Endothelial cell of umbilical vein (primary cell): ENCODE measurements at regions of chr22 and their contacts with region 1.

Region 1: DNA sequence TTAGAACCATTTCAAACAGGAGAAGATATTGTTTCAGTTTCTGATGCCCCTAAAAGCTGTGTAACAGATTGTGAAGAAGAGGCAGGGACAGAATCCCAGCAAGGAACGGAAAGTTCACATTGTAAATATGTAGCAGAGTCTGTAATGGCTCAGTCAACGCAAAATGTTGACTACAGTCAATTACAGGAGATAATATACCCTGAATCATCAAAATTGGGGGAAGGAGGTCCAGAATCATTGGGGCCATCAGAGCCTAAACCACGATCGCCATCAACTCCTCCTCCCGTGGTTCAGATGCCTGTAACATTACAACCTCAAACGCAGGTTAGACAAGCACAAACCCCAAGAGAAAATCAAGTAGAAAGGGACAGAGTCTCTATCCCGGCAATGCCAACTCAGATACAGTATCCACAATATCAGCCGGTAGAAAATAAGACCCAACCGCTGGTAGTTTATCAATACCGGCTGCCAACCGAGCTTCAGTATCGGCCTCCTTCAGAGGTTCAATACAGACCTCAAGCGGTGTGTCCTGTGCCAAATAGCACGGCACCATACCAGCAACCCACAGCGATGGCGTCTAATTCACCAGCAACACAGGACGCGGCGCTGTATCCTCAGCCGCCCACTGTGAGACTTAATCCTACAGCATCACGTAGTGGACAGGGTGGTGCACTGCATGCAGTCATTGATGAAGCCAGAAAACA is 40.8 kb downstream of the IGLL1 start:
- DNase-seq: peak; percentile 86
- H3K4me3 ChIP-seq: no peak overlapping the region
- H3K27ac ChIP-seq: no peak overlapping the region
- H3K4me1 ChIP-seq: no peaks in the 10 kb centered on the region
- H3K27me3 ChIP-seq: peaks cover 0 to 5% of the 10 kb centered on the region in 2 experiments
- CTCF ChIP-seq: peak; percentile 75 to 81
- POLR2A ChIP-seq: no peak

Region 2: DNA sequence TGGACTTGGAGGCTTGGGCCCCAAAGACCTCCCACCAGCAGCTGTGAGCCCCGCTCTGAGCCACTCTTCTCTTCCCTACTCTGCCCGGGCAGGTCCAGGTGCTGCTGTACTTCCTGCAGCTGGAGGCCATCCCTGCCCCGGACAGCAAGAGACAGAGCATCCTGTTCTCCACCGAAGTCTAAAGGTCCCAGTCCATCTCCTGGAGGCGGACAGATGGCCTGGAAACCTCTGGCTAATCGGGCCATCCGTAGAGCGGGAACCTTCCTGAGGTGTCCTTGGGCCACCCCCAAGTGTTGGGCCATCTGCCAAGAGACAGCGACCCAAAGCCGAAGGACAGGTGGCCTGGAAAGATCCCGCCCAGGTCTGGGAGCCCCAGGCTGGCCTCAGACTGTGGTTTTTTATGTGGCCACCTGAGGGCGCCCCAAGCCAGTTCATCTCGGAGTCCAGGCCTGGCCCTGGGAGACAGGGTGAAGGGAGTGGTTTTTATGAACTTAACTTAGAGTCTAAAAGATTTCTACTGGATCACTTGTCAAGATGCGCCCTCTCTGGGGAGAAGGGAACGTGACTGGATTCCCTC is 223.9 kb before region 1 on chr22:
- CTCF ChIA-PET with region 1: no interaction called
- POLR2A ChIA-PET with region 1: no interaction called
- dilution Hi-C with region 1: no loop called
- intact Hi-C with region 1: loop called (anchors 2 kb)
- DNase-seq: peak; percentile 49
- H3K4me3 ChIP-seq: no peak overlapping the region
- H3K27ac ChIP-seq: no peak overlapping the region
- H3K4me1 ChIP-seq: peaks cover 1% of the 10 kb centered on the region
- H3K27me3 ChIP-seq: no peaks in the 10 kb centered on the region
- CTCF ChIP-seq: peak; percentile 55 to 67
- POLR2A ChIP-seq: no peak

Region 3: DNA sequence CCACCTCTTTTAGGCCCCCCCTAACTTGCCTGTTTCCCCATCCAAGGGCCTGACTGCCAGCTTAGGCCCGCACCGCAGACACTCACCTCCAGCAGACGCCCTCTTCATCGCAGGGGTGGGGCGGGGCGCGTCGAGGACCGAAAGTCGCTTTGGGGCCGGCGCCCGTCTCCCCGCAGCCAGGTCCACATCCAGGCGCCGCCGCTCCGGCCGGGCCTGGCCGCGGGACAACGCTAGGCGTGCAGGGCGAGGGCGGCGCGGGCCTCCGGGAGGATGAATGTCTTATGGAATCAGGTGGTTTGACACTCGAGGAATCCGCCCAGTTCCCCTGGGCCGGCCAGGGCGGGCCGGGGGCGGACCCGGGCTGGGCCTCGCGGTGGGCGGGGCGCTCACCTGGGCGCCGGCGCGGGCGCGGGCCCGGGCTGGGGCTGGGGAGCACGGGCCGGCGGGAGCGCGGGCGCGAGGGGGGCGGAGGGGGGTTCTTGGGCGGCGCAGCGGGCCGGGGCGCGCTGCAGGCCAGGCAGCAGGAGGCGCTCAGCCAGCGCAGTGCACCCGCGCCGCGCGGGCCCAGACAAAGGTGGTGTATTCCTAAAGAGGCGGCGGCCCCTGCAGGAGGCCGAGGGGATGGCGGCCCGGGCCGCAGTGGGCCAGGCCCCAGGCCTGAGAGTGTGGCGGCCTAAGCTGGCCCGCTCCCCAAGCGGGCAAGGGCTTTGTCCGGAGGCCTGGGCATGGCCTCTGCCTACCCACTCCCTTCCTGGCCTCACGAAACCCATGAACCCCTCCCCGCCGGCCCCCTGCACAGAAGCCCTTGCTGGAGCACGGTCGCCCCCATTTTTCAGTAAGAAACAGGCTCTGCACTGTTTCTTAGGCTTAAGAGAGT is 136.8 kb before region 1 on chr22:
- CTCF ChIA-PET with region 1: interaction called, 4 read pairs
- POLR2A ChIA-PET with region 1: no interaction called
- dilution Hi-C with region 1: no loop called
- intact Hi-C with region 1: loop called (anchors 1 kb)
- DNase-seq: peak; percentile 39
- H3K4me3 ChIP-seq: peak overlapping the region in 1 of 3 experiments; percentile 15
- H3K27ac ChIP-seq: no peak overlapping the region
- H3K4me1 ChIP-seq: no peaks in the 10 kb centered on the region
- H3K27me3 ChIP-seq: no peaks in the 10 kb centered on the region
- CTCF ChIP-seq: peak; percentile 45 to 86
- POLR2A ChIP-seq: no peak

Region 4: GRCh38 chr22:23450434-23450795 is 88.9 kb before region 1 on chr22:
- CTCF ChIA-PET with region 1: no interaction called
- POLR2A ChIA-PET with region 1: no interaction called
- dilution Hi-C with region 1: no loop called
- intact Hi-C with region 1: no loop called
- DNase-seq: no peak
- H3K4me3 ChIP-seq: no peak overlapping the region
- H3K27ac ChIP-seq: no peak overlapping the region
- H3K4me1 ChIP-seq: no peaks in the 10 kb centered on the region
- H3K27me3 ChIP-seq: no peaks in the 10 kb centered on the region
- CTCF ChIP-seq: no peak
- POLR2A ChIP-seq: no peak

Region 5: DNA sequence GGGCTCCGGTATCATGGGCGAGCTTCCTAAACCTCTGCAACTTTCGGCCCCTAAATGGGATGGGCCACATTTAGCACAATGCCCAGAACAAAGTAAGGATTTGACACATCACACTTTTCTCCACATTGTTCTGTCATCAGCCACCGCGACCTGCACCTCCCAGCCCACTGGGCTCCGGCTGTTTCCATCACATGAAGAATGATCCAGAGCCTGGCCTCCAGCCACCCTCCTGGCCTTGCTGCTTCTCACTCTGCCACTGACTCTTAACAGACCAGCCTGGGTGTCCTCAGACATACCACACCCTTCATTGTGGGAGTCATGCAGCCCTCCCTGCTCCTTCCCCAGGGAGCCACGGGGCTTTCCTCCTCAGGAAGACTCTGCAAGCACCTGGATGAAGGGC is 72.9 kb before region 1 on chr22:
- CTCF ChIA-PET with region 1: no interaction called
- POLR2A ChIA-PET with region 1: no interaction called
- dilution Hi-C with region 1: no loop called
- intact Hi-C with region 1: no loop called
- DNase-seq: no peak
- H3K4me3 ChIP-seq: no peak overlapping the region
- H3K27ac ChIP-seq: no peak overlapping the region
- H3K4me1 ChIP-seq: no peaks in the 10 kb centered on the region
- H3K27me3 ChIP-seq: peaks cover 2 to 3% of the 10 kb centered on the region in 2 experiments
- CTCF ChIP-seq: no peak
- POLR2A ChIP-seq: no peak

Region 6: DNA sequence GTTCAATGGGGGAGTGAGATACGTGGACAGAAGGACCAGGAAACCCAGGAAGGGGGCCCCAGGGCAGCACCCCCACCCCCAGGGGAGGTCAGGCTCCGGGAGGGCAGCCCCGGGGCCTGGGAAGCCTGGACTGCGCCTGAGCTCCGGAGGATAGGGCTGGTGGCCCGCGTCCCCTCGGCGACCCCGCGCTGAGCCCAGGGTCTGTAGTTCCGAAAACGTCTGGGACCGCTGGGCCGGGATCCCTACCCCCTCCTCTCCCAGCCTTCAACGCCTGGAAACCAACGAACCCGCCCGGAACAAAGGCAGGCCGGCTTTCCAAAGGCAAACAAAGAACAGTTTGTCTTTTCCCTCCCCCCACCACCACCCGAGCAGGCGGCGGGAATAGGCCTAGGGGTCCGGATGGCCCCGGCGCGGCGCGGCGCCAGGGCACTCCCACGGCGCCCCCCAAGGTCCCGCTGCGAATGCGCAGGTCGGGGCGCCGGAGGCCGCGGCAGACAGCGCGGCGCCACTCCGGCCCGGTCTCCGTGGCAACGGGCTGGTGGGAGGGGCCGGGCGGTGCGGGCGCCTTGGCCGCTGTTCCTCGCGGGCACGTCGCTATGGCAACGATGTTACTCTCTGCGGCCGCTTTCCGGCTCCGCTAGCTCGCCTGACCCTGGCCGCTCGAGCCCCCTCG is 17.7 kb before region 1 on chr22:
- CTCF ChIA-PET with region 1: interaction called, 3 read pairs
- POLR2A ChIA-PET with region 1: no interaction called
- dilution Hi-C with region 1: no loop called
- intact Hi-C with region 1: loop called (anchors 2 kb)
- DNase-seq: peak; percentile 96
- H3K4me3 ChIP-seq: no peak overlapping the region
- H3K27ac ChIP-seq: peak overlapping the region; percentile 97
- H3K4me1 ChIP-seq: peaks cover 23% of the 10 kb centered on the region
- H3K27me3 ChIP-seq: no peaks in the 10 kb centered on the region
- CTCF ChIP-seq: no peak
- POLR2A ChIP-seq: peak; percentile 35

Region 7: GRCh38 chr22:23553924-23554870 is 14.9 kb after region 1 on chr22:
- CTCF ChIA-PET with region 1: no interaction called
- POLR2A ChIA-PET with region 1: no interaction called
- dilution Hi-C with region 1: no loop called
- intact Hi-C with region 1: no loop called
- DNase-seq: no peak
- H3K4me3 ChIP-seq: no peak overlapping the region
- H3K27ac ChIP-seq: no peak overlapping the region
- H3K4me1 ChIP-seq: no peaks in the 10 kb centered on the region
- H3K27me3 ChIP-seq: peaks cover 0 to 2% of the 10 kb centered on the region in 2 experiments
- CTCF ChIP-seq: no peak
- POLR2A ChIP-seq: no peak

Region 8: DNA sequence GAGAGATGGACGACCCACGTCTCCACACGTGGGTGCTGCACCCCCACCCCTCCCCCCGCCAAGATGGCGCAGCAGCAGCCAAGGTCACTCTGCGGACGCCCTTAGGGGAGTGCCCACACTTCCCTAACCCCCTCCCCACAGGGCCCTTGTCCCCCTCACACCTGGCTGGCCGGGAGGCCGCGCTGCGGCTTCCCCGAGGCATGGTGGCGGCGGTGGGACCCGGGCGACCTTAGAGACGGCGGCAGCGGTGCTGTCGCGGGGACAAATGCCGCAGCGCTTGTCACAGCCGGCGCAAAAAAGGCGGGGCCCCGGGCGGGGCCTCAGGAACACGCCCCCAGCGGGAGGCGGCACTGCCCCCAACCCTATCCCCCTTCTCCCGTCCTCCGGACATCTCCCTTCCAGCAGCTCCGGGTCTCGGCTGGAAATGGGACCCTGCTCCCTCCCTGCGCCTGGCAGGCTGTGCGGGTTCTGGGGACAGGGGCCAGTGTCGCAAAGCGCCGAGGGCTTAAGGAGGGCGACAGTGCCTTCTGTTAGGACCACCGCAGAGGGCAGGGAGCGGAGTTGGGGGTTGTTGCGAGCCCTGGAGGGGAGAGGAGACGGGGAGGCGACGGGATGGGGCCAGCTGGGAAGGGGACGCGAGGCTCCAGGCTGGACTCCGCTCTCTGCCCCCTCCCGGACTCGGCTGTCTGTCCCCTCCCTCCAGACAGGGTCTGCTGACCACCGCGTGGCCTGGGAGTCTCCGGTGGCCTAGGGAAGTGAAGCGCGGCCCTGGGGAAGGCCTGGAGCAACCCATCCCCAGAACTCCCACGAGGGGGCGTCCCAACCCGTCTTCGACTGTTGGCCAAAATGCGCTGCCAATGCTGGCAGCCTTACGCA is 228.6 kb after region 1 on chr22 and contains the start of gene CHCHD10:
- CTCF ChIA-PET with region 1: no interaction called
- POLR2A ChIA-PET with region 1: no interaction called
- dilution Hi-C with region 1: no loop called
- intact Hi-C with region 1: loop called (anchors 5 kb)
- DNase-seq: peak; percentile 73
- H3K4me3 ChIP-seq: peak within 1 kb of the TSS; percentile 47 to 74 (median 55)
- H3K27ac ChIP-seq: peak within 1 kb of the TSS; percentile 43
- H3K4me1 ChIP-seq: peaks cover 22% of the 10 kb centered on the region
- H3K27me3 ChIP-seq: no peaks in the 10 kb centered on the region
- CTCF ChIP-seq: peak; percentile 81 to 93
- POLR2A ChIP-seq: peak; percentile 62
- total RNA-seq, gene CHCHD10: 64.8 and 75.6 TPM in 2 replicates

Region 9: DNA sequence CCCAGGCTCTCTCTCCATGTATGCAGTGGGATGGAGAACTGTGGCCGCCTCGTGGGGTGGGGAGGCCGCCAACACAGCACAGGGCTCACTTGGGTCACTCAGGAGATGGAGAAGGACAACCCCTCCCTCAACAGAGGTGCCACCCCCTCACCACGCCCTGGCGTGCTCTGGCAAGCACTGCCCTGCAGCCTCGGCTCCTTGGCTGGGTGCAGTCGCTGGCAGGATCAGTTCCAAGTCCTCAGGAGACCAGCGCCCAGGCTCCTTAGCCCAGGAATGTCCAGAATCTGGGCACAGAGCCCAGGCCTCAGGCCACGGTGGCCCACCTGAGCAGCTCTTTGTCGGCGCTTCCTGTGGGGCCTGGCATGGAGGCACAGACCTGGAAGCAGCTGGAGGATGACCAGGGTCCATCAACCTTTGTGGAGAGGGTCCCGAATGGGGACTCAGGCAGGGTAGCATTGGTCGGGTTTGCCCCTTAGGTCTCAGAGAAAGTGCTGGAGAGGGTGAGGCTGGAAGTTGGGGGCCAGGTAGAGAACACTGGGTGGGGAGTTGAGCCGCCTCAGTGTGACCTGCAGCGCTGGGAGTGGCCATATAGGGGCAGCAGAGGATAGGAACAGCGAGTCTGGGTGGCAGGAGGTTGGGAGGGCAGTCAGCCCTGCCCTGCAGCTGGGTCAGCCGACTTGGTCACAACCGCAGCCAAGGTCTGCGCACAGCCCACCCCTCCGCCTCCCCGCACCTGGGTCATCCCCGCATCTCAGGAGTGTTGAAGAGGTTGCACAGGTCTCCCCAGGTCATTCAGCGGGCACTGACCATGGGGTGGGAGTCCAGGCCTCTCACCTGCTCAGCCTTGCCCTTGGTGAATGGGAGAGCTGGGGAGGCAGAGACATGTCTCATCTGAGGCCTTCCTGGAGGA is 650.2 kb after region 1 on chr22:
- CTCF ChIA-PET with region 1: no interaction called
- POLR2A ChIA-PET with region 1: no interaction called
- dilution Hi-C with region 1: no loop called
- intact Hi-C with region 1: no loop called
- DNase-seq: peak; percentile 61
- H3K4me3 ChIP-seq: no peak overlapping the region
- H3K27ac ChIP-seq: no peak overlapping the region
- H3K4me1 ChIP-seq: peaks cover 9% of the 10 kb centered on the region
- H3K27me3 ChIP-seq: no peaks in the 10 kb centered on the region
- CTCF ChIP-seq: peak; percentile 90 to 94
- POLR2A ChIP-seq: no peak